Activated CD4-positive, alpha-beta memory T cell treated with anti-CD3 and anti-CD28 coated beads, Interleukin-2, amount 10 ng/mL, durations not matched to agents 7 days and 5 days (primary cell): ENCODE measurements at regions of chr11 and their contacts with region 1.

Region 1: DNA sequence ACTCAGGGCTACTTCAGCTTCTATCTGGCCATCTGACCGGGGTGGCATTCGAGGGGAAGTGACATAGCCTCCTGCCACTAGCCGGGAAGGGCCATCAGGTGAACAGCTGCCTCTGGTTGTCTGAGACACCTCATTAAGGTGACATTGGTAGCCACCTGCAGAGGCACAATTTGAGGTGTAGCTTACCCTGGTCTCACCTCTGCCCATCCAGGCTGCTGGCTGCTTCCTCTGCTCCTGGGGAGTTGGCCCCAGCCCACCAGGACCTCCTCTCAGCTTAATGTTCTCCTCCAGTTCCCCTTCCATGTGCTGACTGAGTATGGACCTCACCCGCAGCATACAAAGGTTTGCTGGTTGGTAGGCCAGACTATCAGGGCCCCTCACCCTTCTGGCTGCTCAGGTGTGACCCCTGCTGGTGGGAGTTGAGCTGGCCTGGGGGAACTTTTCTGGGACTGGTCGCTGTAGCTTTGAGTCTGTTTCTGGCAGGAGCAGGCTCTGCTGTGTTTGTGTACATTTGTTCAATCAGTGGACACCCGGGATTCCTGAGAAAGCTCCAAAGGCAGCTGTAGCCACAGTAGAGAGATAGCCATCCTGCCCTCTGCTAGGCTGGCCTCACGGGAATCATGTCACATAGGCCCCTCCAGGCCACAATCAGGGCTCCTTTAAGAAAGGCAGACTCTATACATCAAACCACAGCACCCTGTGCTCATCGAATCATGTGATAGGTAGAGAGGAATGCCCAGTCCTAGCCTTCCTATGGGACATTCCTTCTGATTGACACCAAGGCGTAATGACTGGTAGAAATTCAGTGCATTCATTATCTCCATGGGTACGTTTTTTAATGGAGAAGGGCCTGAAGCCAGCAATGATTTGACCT is 295.1 kb upstream of the PLET1 start:
- DNase-seq: peak; percentile 74
- H3K4me3 Mint-ChIP-seq: no peak overlapping the region
- H3K27ac Mint-ChIP-seq: no peak overlapping the region
- H3K4me1 Mint-ChIP-seq: peaks cover 4% of the 10 kb centered on the region
- H3K27me3 Mint-ChIP-seq: peaks cover 2% of the 10 kb centered on the region

Region 2: DNA sequence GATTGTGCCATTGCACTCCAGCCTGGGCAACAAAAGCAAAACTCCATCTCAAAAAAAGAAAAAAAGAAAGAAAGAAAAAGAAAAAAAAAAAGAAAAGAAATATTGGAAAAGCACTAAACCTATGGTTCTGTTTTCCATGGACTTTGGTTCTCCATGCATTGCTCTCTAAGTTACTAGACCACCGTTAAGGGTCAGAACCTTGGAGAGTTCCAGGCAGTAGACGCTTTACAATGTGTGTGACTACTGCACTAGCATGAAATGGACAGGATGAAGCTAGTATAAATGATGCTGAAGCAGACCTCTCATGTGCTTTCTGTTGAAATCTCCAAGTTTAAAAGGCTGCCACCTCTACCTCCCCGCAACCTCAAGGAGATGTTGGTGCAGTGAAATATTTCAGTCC is 890.0 kb before region 1 on chr11:
- CTCF ChIA-PET with region 1: no interaction called
- POLR2A ChIA-PET with region 1: no interaction called
- DNase-seq: no peak
- H3K4me3 Mint-ChIP-seq: no peak overlapping the region
- H3K27ac Mint-ChIP-seq: no peak overlapping the region
- H3K4me1 Mint-ChIP-seq: no peaks in the 10 kb centered on the region
- H3K27me3 Mint-ChIP-seq: no peaks in the 10 kb centered on the region

Region 3: GRCh38 chr11:112289588-112290492 is 265.9 kb before region 1 on chr11:
- CTCF ChIA-PET with region 1: interaction called, 78 read pairs
- POLR2A ChIA-PET with region 1: interaction called, 3 read pairs
- DNase-seq: peak; percentile 89
- H3K4me3 Mint-ChIP-seq: peak overlapping the region; percentile 74
- H3K27ac Mint-ChIP-seq: peak overlapping the region; percentile 50
- H3K4me1 Mint-ChIP-seq: peaks cover 41% of the 10 kb centered on the region
- H3K27me3 Mint-ChIP-seq: peaks cover 8% of the 10 kb centered on the region

Region 4: GRCh38 chr11:112440518-112440917 is 115.2 kb before region 1 on chr11:
- CTCF ChIA-PET with region 1: no interaction called
- POLR2A ChIA-PET with region 1: no interaction called
- DNase-seq: no peak
- H3K4me3 Mint-ChIP-seq: no peak overlapping the region
- H3K27ac Mint-ChIP-seq: no peak overlapping the region
- H3K4me1 Mint-ChIP-seq: no peaks in the 10 kb centered on the region
- H3K27me3 Mint-ChIP-seq: peaks cover 21% of the 10 kb centered on the region

Region 5: DNA sequence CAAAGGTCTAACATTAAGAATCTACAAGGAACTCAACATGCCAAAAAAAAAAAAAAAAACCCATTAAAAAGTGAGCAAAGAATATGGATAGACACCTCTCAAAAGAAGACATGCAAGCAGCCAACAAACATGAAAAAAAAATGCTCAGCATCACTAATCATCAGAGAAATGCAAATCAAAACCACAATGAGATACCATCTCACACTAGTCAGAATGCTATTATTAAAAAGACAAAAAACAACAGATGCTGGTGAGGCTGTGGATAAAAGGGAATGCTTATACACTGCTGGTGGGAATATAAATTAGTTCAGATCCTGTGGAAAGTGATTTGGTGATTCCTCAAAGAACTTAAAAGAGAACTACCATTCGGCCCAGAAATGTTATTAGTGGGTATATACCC is 37.4 kb before region 1 on chr11:
- CTCF ChIA-PET with region 1: no interaction called
- POLR2A ChIA-PET with region 1: no interaction called
- DNase-seq: no peak
- H3K4me3 Mint-ChIP-seq: no peak overlapping the region
- H3K27ac Mint-ChIP-seq: no peak overlapping the region
- H3K4me1 Mint-ChIP-seq: peaks cover 5% of the 10 kb centered on the region
- H3K27me3 Mint-ChIP-seq: no peaks in the 10 kb centered on the region

Region 6: DNA sequence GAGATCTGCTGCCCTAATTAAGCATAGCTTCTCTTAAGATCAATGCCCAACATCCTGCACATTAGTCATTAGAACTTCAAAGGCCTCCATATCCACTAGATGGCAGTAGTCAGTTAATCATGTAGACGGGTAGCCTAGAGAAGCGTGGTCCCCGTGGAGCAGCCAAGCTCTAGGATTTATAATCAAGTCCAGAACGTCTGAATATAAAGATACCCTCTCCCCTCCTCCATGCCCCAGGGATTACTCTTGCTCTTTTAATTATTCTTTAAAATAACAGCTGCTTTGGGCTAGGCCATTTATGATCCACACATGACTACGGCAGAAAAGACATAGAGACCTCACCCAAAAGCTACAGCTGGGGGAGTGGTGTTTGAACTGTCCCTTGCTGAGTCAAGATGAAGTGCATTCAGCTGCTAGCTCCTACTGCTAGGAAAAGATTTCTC is 32.5 kb after region 1 on chr11:
- CTCF ChIA-PET with region 1: interaction called, 12 read pairs
- POLR2A ChIA-PET with region 1: no interaction called
- DNase-seq: peak; percentile 45
- H3K4me3 Mint-ChIP-seq: no peak overlapping the region
- H3K27ac Mint-ChIP-seq: no peak overlapping the region
- H3K4me1 Mint-ChIP-seq: peaks cover 5% of the 10 kb centered on the region
- H3K27me3 Mint-ChIP-seq: peaks cover 3% of the 10 kb centered on the region